ENCODE measurements at regions of chr18 and their contacts with region 1.

Region 1: GRCh38 chr18:24014062-24014985 is at the start of gene TTC39C:
- DNase-seq: peak; percentile 78 to 88 (median 82)
- H3K4me3 ChIP-seq: peak within 1 kb of the TSS; percentile 73 to 83
- H3K4me3 Mint-ChIP-seq: peak within 1 kb of the TSS; percentile 92 to 100 (median 96)
- H3K27ac ChIP-seq: peak within 1 kb of the TSS; percentile 75
- H3K27ac Mint-ChIP-seq: peak within 1 kb of the TSS; percentile 90 to 98 (median 94)
- H3K4me1 ChIP-seq: peaks cover 77% of the 10 kb centered on the region
- H3K4me1 Mint-ChIP-seq: peaks cover 53 to 87% (median 64%) of the 10 kb centered on the region in 4 donors
- H3K27me3 ChIP-seq: no peaks in the 10 kb centered on the region
- H3K27me3 Mint-ChIP-seq: no peaks in the 10 kb centered on the region
- total RNA-seq, gene TTC39C: 168 to 180 TPM

Region 2: DNA sequence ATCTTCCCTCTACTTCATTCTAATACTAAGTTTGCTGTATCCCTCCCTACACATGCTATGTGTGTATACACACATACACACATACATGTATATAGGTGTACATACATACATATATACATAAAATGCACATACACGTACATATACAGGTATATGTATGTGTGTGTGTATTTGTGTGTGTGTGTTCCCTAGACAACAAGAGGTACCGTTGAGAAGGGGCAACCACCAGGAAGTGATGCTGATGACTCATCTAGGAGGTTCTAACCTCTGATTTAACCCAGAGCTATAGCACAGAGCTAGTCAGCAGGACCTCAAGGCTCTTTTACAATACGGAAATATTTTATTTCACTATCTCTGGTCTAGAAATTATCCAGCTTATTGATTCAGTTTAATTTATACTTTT is 185.9 kb before region 1 on chr18:
- CTCF ChIA-PET with region 1: no interaction called
- POLR2A ChIA-PET with region 1: interaction called, 3 read pairs
- intact Hi-C with region 1: loop called (anchors 5 kb)
- DNase-seq: peak; percentile 68 to 87 (median 83)
- H3K4me3 ChIP-seq: no peak overlapping the region
- H3K4me3 Mint-ChIP-seq: peak overlapping the region in 1 of 8 donors; percentile 57
- H3K27ac ChIP-seq: peak overlapping the region; percentile 48
- H3K27ac Mint-ChIP-seq: peak overlapping the region in 6 of 7 donors; percentile 80 to 96 (median 92)
- H3K4me1 ChIP-seq: peaks cover 15% of the 10 kb centered on the region
- H3K4me1 Mint-ChIP-seq: peaks cover 15 to 36% (median 19%) of the 10 kb centered on the region in 4 donors
- H3K27me3 ChIP-seq: no peaks in the 10 kb centered on the region
- H3K27me3 Mint-ChIP-seq: no peaks in the 10 kb centered on the region

Region 3: GRCh38 chr18:23994361-23994902 is 19.9 kb before region 1 on chr18:
- CTCF ChIA-PET with region 1: interaction called, 11 read pairs
- POLR2A ChIA-PET with region 1: interaction called, 152 read pairs
- intact Hi-C with region 1: loop called (anchors 1 kb)
- DNase-seq: peak; percentile 61 to 81 (median 66)
- H3K4me3 ChIP-seq: peak overlapping the region; percentile 49 to 70
- H3K4me3 Mint-ChIP-seq: peak overlapping the region; percentile 82 to 96 (median 91)
- H3K27ac ChIP-seq: peak overlapping the region; percentile 78
- H3K27ac Mint-ChIP-seq: peak overlapping the region; percentile 86 to 98 (median 96)
- H3K4me1 ChIP-seq: peaks cover 94% of the 10 kb centered on the region
- H3K4me1 Mint-ChIP-seq: peaks cover 49 to 91% (median 63%) of the 10 kb centered on the region in 4 donors
- H3K27me3 ChIP-seq: no peaks in the 10 kb centered on the region
- H3K27me3 Mint-ChIP-seq: no peaks in the 10 kb centered on the region

Region 4: GRCh38 chr18:24026457-24026856 is 12.1 kb after region 1 on chr18:
- CTCF ChIA-PET with region 1: interaction called, 3 read pairs
- POLR2A ChIA-PET with region 1: interaction called, 13 read pairs
- intact Hi-C with region 1: no loop called
- DNase-seq: no peak
- H3K4me3 ChIP-seq: no peak overlapping the region
- H3K4me3 Mint-ChIP-seq: peak overlapping the region in 6 of 8 donors; percentile 28 to 67 (median 56)
- H3K27ac ChIP-seq: no peak overlapping the region
- H3K27ac Mint-ChIP-seq: peak overlapping the region; percentile 28 to 82 (median 66)
- H3K4me1 ChIP-seq: peaks cover 94% of the 10 kb centered on the region
- H3K4me1 Mint-ChIP-seq: peaks cover 71 to 95% (median 82%) of the 10 kb centered on the region in 4 donors
- H3K27me3 ChIP-seq: no peaks in the 10 kb centered on the region
- H3K27me3 Mint-ChIP-seq: no peaks in the 10 kb centered on the region

Region 5: GRCh38 chr18:24322584-24323136 is 308.3 kb after region 1 on chr18:
- CTCF ChIA-PET with region 1: no interaction called
- POLR2A ChIA-PET with region 1: no interaction called
- intact Hi-C with region 1: no loop called
- DNase-seq: no peak
- H3K4me3 ChIP-seq: no peak overlapping the region
- H3K4me3 Mint-ChIP-seq: no peak overlapping the region
- H3K27ac ChIP-seq: no peak overlapping the region
- H3K27ac Mint-ChIP-seq: no peak overlapping the region
- H3K4me1 ChIP-seq: no peaks in the 10 kb centered on the region
- H3K4me1 Mint-ChIP-seq: no peaks in the 10 kb centered on the region
- H3K27me3 ChIP-seq: no peaks in the 10 kb centered on the region
- H3K27me3 Mint-ChIP-seq: no peaks in the 10 kb centered on the region